SK-N-SH (cell line): ENCODE measurements at regions of chr10 and their contacts with region 1.

Region 1: GRCh38 chr10:73644015-73644743 is 2.9 kb upstream of the MYOZ1 start:
- DNase-seq: peak; percentile 72
- H3K4me3 ChIP-seq: no peak overlapping the region; a peak in 1 of 4 replicates
- H3K27ac ChIP-seq: no peak overlapping the region
- H3K4me1 ChIP-seq: peaks cover 0 to 16% of the 10 kb centered on the region in 2 experiments; a peak in 1 of 4 replicates
- H3K27me3 ChIP-seq: no peaks in the 10 kb centered on the region
- CTCF ChIP-seq: peak; percentile 85
- EP300 ChIP-seq: no peak
- RAD21 ChIP-seq: peak; percentile 95

Region 2: DNA sequence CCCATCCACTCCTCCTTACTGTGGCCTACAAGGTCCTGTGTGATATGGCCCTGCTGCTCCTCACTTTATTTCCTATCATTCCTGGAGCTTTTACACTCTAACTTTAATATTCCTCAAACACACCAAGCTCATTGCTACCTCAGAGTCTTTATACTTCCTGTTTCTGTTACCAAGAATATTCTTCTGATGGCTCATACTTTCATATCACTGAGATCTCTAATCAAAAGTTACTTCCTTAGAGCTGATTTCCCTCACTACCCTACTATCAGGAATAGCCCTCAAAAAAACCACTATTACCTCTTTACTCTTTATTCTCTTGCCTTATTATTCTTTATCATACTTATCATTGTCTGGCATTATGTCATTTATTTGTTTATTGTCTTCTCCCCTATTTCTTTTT is 142.5 kb before region 1 on chr10:
- CTCF ChIA-PET with region 1: no interaction called
- POLR2A ChIA-PET with region 1: no interaction called
- DNase-seq: no peak
- H3K4me3 ChIP-seq: no peak overlapping the region
- H3K27ac ChIP-seq: peak overlapping the region in 1 of 2 experiments; percentile 64; a peak in 2 of 4 replicates
- H3K4me1 ChIP-seq: peaks cover under 1 to 8% of the 10 kb centered on the region in 2 experiments; a peak in 3 of 4 replicates
- H3K27me3 ChIP-seq: no peaks in the 10 kb centered on the region
- CTCF ChIP-seq: no peak
- EP300 ChIP-seq: no peak
- RAD21 ChIP-seq: no peak

Region 3: GRCh38 chr10:73517271-73517877 is 126.8 kb before region 1 on chr10:
- CTCF ChIA-PET with region 1: interaction called, 19 read pairs
- POLR2A ChIA-PET with region 1: no interaction called
- DNase-seq: no peak
- H3K4me3 ChIP-seq: no peak overlapping the region
- H3K27ac ChIP-seq: no peak overlapping the region
- H3K4me1 ChIP-seq: peaks cover 0 to 7% of the 10 kb centered on the region in 2 experiments; a peak in 1 of 4 replicates
- H3K27me3 ChIP-seq: no peaks in the 10 kb centered on the region
- CTCF ChIP-seq: no peak
- EP300 ChIP-seq: no peak
- RAD21 ChIP-seq: no peak

Region 4: DNA sequence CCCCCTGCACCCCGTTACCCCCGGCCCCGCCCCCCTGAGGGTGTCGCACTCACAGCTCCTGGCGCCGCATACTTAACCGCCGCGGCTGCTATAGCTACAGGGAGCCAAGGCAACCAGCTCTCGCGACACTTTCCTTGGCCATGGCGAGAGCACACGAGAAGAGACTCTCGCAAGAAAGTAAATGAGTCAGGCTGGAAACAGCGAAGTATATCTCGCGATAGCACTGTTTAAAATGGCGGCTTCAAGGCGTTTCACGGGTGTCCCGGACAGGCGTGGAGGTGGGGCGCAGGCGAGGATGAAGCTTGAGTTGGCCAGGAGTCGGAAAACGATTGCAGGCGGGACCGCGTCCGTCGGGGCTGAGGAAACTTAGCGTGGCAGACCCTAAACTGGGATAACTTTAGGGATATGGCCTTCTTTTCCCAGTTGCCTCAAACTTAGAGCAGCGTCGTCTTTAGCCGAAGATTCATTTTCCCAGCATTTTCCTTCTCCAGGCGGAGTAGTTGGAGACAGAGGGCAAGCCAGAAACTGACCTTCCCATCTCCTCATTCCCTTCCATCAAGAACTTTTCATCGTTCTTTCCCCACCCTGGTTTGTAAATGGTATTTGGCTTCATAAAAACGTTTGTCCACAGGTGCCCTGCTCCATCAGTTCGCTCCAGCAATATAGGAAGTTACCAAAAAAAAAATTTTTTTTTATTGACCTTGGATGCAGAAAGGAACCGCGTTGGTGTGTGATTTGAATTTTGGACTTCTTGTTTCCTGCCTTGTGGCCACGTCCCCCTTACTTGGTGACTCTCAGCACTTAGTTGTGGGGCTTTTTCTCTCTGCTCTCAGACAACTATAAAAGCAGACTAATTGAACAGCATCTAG is 18.1 kb before region 1 on chr10:
- CTCF ChIA-PET with region 1: interaction called, 20 read pairs
- POLR2A ChIA-PET with region 1: interaction called, 3 read pairs
- DNase-seq: peak; percentile 92
- H3K4me3 ChIP-seq: peak overlapping the region; percentile 72 to 93
- H3K27ac ChIP-seq: peak overlapping the region; percentile 85 to 90
- H3K4me1 ChIP-seq: peaks cover 0 to 4% of the 10 kb centered on the region in 2 experiments; a peak in 3 of 4 replicates
- H3K27me3 ChIP-seq: no peaks in the 10 kb centered on the region
- CTCF ChIP-seq: no peak
- EP300 ChIP-seq: no peak
- RAD21 ChIP-seq: no peak